ENCODE measurements at regions of chr10 and their contacts with region 1.

Region 1: DNA sequence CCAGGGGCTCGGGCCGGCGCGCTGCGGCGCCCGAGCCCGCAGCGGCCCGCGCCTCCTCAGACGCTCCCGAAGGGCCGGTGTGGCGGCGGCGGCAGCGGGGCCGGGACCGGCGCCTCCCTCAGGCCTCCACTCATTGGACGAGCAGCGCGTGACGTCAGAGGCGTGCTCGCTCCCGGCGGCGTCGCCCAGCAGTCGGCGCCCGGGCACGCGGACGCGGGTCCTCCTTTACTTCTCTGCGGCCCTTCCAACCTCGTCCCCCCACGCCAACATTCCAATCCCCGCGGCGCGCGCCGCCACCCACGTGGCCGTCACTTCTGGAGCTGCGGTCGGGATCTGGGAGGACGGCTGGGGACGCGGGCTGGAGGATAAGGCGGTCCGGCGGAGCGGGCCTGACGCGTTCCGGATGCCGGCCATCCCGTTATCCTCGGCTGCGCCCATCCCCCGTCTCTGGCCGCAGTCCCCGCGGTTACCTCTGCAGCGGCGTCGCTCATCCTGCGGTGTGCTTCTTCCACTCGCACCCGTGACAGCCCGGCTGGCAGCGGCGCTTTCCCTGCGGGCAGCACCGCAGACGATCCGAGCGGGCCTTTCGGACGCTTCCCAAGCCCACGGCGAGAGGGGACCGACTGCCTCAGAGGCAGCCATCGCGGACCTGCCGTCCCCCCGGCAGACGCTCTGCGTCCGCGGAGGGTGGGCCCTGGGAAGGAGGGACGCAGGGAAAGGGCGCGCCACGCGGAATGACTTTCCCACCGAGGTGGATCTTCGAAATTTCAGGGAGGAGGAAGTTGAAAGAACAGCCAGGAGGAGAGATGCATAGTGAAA is at the start of gene PDZD8:
- DNase-seq: peak; percentile 77 to 96 (median 92)
- ATAC-seq: peak; percentile 76
- H3K4me3 ChIP-seq: peak within 1 kb of the TSS; percentile 87 to 95
- H3K4me3 Mint-ChIP-seq: peak within 1 kb of the TSS; percentile 95
- H3K27ac ChIP-seq: peak within 1 kb of the TSS; percentile 73 to 83
- H3K27ac Mint-ChIP-seq: peak within 1 kb of the TSS; percentile 95
- H3K4me1 ChIP-seq: peaks cover 26% of the 10 kb centered on the region
- H3K4me1 Mint-ChIP-seq: peaks cover 37% of the 10 kb centered on the region
- H3K27me3 ChIP-seq: peaks cover 0 to 5% of the 10 kb centered on the region in 2 experiments
- H3K27me3 Mint-ChIP-seq: peaks cover 25% of the 10 kb centered on the region
- CTCF ChIP-seq: no peak
- total RNA-seq, gene PDZD8: 49.6 to 59.8 TPM

Region 2: GRCh38 chr10:116796910-116797513 is 578.6 kb before region 1 on chr10:
- CTCF ChIA-PET with region 1: no interaction called
- POLR2A ChIA-PET with region 1: no interaction called
- intact Hi-C with region 1: loop called in 1 of 2 experiments (anchors 10 kb)
- DNase-seq: peak; percentile 36 to 72 (median 64)
- ATAC-seq: no peak
- H3K4me3 ChIP-seq: no peak overlapping the region
- H3K4me3 Mint-ChIP-seq: no peak overlapping the region
- H3K27ac ChIP-seq: no peak overlapping the region
- H3K27ac Mint-ChIP-seq: no peak overlapping the region
- H3K4me1 ChIP-seq: no peaks in the 10 kb centered on the region
- H3K4me1 Mint-ChIP-seq: no peaks in the 10 kb centered on the region
- H3K27me3 ChIP-seq: no peaks in the 10 kb centered on the region
- H3K27me3 Mint-ChIP-seq: peaks cover 27% of the 10 kb centered on the region
- CTCF ChIP-seq: peak; percentile 74

Region 3: DNA sequence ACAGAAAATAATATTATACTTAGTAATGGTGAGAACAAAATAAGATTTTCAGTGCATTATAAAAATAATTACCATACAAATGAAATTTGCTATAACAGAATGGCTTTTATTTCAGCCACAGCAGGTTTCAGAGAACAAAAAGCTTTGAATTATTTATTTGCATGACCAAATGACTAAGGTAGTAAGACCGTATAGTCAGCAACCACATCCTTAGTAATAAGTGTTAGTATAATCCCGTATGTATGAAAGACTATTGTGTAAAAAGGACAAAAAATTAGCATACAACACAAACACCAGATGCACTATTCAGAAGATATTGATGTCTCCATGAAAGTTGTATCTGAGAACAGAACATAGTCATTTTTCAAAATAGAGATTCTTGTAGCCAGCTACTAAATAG is 12.5 kb before region 1 on chr10:
- CTCF ChIA-PET with region 1: no interaction called
- POLR2A ChIA-PET with region 1: interaction called, 3 read pairs
- intact Hi-C with region 1: loop called in 1 of 2 experiments (anchors 1 kb)
- DNase-seq: no peak
- ATAC-seq: no peak
- H3K4me3 ChIP-seq: no peak overlapping the region
- H3K4me3 Mint-ChIP-seq: no peak overlapping the region
- H3K27ac ChIP-seq: no peak overlapping the region
- H3K27ac Mint-ChIP-seq: no peak overlapping the region
- H3K4me1 ChIP-seq: peaks cover 24% of the 10 kb centered on the region
- H3K4me1 Mint-ChIP-seq: peaks cover 64% of the 10 kb centered on the region
- H3K27me3 ChIP-seq: no peaks in the 10 kb centered on the region
- H3K27me3 Mint-ChIP-seq: no peaks in the 10 kb centered on the region
- CTCF ChIP-seq: no peak

Region 4: GRCh38 chr10:118046395-118047156 is 671.0 kb after region 1 on chr10 and contains the start of gene RAB11FIP2:
- CTCF ChIA-PET with region 1: no interaction called
- POLR2A ChIA-PET with region 1: no interaction called
- intact Hi-C with region 1: loop called (anchors 5 kb)
- DNase-seq: peak; percentile 93 to 98 (median 96)
- ATAC-seq: peak; percentile 94
- H3K4me3 ChIP-seq: peak within 1 kb of the TSS; percentile 54 to 75
- H3K4me3 Mint-ChIP-seq: peak within 1 kb of the TSS; percentile 89
- H3K27ac ChIP-seq: peak within 1 kb of the TSS; percentile 44 to 70
- H3K27ac Mint-ChIP-seq: peak within 1 kb of the TSS; percentile 89
- H3K4me1 ChIP-seq: peaks cover 18% of the 10 kb centered on the region
- H3K4me1 Mint-ChIP-seq: peaks cover 45% of the 10 kb centered on the region
- H3K27me3 ChIP-seq: no peaks in the 10 kb centered on the region
- H3K27me3 Mint-ChIP-seq: no peaks in the 10 kb centered on the region
- CTCF ChIP-seq: no peak
- total RNA-seq, gene RAB11FIP2: 32.6 to 34.2 TPM

Region 5: DNA sequence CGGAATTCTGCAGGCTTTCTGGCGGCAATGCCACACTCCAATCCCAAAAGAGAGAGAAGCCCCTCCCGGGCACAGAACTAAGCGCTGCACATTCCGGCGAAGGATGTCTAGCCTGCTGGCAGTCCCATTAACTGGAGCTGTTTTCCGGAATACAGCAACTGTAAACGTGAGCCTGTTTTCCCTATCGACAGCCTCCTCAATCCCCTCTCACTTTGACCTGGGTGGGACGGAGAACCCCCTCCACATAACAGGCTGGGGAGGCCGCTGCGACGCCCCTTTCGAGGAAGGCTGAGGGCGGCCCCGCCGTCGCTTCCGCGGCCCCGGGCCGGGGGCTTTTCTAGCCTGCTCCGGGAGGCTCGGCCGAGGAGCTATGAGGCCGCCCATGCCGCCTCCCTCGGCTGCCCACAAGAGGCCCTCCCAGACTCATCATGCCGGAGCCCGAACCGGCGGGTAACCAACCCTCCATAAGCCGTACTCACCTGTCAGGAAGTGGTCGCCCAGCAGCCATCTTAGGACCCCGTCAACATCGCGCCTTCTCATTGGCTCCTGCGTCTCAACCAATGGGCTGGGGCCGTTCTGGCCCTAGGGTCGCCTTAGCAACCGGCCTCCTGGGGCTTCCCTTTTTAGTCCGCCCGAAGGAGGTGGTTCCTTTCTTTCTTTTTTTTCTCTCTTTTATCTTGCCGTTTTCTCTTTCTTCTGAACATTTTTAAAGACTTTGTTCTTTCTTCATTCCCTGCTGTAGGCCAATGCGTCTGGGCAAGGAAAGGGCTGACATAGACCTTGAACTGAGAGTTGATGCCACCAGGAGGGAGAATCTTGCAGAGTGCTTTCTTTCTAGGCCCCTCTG is 966.4 kb after region 1 on chr10 and contains the start of gene FAM204A:
- CTCF ChIA-PET with region 1: no interaction called
- POLR2A ChIA-PET with region 1: no interaction called
- intact Hi-C with region 1: loop called (anchors 1 to 5 kb)
- DNase-seq: peak; percentile 95 to 99 (median 97)
- ATAC-seq: peak; percentile 94
- H3K4me3 ChIP-seq: peak within 1 kb of the TSS; percentile 81 to 86
- H3K4me3 Mint-ChIP-seq: peak within 1 kb of the TSS; percentile 96
- H3K27ac ChIP-seq: peak within 1 kb of the TSS; percentile 51 to 72
- H3K27ac Mint-ChIP-seq: peak within 1 kb of the TSS; percentile 95
- H3K4me1 ChIP-seq: peaks cover 22% of the 10 kb centered on the region
- H3K4me1 Mint-ChIP-seq: peaks cover 53% of the 10 kb centered on the region
- H3K27me3 ChIP-seq: no peaks in the 10 kb centered on the region
- H3K27me3 Mint-ChIP-seq: no peaks in the 10 kb centered on the region
- CTCF ChIP-seq: no peak
- total RNA-seq, gene FAM204A: 44.8 to 51.7 TPM

Measured in CD8-positive, alpha-beta T cell (primary cell).